Activated CD4-positive, alpha-beta T cell treated with anti-CD3 and anti-CD28 coated beads, Interleukin-2, amount 10 ng/mL, durations not matched to agents 7 days and 5 days (primary cell): ENCODE measurements at regions of chr17 and their contacts with region 1.

Region 1: DNA sequence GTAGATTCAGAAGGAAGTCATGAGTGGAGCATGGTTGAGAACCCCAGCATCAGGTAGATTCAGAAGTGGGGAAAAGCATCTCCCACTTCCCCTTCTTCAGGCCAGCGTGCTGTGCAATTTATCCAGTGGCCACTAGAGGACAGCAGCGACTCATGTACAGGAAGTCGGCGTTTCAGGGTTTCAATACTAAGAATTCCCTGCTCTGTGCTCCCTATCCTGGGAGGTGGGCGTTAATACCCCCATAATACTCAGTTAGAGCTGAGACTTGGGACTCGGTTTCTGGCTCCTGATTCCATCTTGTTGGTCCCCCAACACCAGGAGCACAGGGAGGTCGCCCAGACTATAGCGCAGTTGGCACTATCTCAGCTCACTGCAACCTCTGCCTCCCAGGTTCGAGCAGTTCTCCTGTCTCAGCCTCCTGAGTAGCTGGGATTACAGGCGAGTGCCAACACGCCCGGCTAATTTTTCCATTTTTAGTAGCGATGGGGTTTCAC is 75.3 kb upstream of the AMZ2 start:
- DNase-seq: peak; percentile 80
- H3K4me3 Mint-ChIP-seq: no peak overlapping the region
- H3K27ac Mint-ChIP-seq: no peak overlapping the region
- H3K4me1 Mint-ChIP-seq: peaks cover 31% of the 10 kb centered on the region
- H3K27me3 Mint-ChIP-seq: no peaks in the 10 kb centered on the region

Region 2: DNA sequence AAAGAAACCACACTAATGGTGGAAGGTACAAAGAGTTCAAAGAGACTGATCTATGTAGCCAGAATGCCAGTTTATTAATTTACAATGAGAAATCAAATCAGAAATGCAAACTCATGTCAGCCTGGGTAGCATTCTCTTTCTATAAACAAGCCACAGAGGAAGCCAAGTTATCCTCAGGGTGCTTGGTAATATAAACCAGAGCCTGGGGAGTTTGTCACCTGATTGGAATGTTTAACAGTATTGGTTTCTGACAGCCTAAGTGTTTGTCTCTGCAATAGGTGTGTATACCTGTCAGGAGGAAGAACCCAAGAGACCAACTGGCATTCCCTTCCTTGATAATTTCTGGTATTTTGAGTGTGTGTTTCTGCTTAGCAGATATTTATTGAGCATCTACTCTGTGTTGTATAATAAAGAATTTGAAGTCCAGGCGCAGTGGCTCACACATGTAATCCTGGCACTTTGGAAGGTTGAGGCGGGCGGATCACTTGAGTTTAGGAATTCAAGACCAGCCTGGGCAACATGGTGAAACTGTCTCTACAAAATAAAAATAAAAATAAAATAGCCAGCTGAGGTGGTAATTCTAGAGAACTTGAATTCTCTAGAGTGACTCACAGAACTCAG is 173.1 kb before region 1 on chr17:
- CTCF ChIA-PET with region 1: no interaction called
- POLR2A ChIA-PET with region 1: no interaction called
- DNase-seq: no peak
- H3K4me3 Mint-ChIP-seq: no peak overlapping the region
- H3K27ac Mint-ChIP-seq: no peak overlapping the region
- H3K4me1 Mint-ChIP-seq: peaks cover 19% of the 10 kb centered on the region
- H3K27me3 Mint-ChIP-seq: peaks cover 23% of the 10 kb centered on the region

Region 3: DNA sequence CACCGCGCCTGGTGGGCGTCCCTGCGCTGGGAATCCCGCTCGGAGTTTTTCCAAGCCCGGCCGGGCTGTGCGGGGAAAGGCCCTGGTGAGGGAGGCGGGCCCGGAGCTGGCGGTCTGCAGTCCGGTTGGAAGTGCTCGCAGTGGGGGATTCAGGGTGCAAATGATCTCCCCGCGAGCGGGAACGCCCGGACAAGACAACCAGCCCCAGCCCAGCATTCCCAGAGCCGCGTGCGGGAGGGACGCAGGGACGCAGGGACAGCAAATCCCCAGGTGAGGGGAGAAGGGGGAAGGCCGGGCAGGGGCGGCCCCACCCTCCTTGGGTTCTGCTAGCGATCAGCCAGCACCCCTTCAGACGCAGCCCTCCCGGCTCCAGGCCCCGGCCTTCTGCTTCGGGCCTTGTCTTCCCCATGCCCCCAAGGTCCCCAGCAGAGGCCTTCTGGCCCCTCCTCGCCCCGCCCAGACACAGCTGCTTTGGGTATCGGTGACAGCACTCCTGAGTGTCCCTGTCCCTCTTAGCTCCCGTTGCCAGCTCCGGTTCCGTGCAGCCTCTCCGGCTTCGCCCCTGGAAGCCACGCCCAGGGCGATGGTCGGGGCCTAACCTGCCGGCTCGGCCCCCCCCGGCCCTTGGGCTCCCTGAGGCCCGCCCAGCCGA is 24.6 kb after region 1 on chr17:
- CTCF ChIA-PET with region 1: interaction called, 19 read pairs
- POLR2A ChIA-PET with region 1: no interaction called
- DNase-seq: no peak
- H3K4me3 Mint-ChIP-seq: peak overlapping the region; percentile 16
- H3K27ac Mint-ChIP-seq: no peak overlapping the region
- H3K4me1 Mint-ChIP-seq: peaks cover 41% of the 10 kb centered on the region
- H3K27me3 Mint-ChIP-seq: peaks cover 56% of the 10 kb centered on the region